Activated CD4-positive, alpha-beta T cell treated with anti-CD3 and anti-CD28 coated beads, Interleukin-2, amount 10 ng/mL, durations not matched to agents 24 days and 14 days (primary cell): ENCODE measurements at regions of chr7 and their contacts with region 1.

Region 1: DNA sequence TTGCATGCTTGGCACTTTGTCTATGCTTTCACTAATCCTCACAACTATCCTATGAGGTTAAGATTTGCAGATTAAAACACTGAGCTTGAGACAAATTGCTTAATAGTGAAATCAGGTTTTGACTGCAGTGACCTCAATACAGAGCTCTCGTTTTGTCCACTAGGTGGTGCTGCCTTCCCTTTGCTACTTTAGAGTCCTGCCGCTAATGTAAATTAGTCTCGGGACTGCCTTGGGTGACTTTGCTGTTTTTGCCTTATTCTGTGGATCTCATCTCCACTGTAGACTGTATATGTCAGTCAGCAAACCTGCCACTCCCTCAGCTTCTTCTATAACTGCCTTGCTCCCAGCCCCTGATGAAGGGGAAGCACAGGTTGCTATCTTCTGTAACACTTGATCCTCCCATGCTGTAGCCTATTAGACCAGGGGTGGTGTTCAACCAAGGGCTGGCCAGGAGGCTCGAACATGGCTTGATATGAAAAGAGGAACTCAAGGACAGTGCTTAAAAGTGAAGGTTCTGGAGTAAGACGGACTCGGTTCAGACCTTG is 26.0 kb downstream of the ASB4 start:
- DNase-seq: peak; percentile 86
- H3K4me3 Mint-ChIP-seq: no peak overlapping the region
- H3K27ac Mint-ChIP-seq: no peak overlapping the region
- H3K4me1 Mint-ChIP-seq: peaks cover 3% of the 10 kb centered on the region
- H3K27me3 Mint-ChIP-seq: peaks cover 11% of the 10 kb centered on the region

Region 2: GRCh38 chr7:95501261-95501832 is 10.4 kb before region 1 on chr7:
- intact Hi-C with region 1: loop called (anchors 1 kb)
- DNase-seq: peak; percentile 78
- H3K4me3 Mint-ChIP-seq: peak overlapping the region; percentile 10
- H3K27ac Mint-ChIP-seq: peak overlapping the region; percentile 84
- H3K4me1 Mint-ChIP-seq: peaks cover 27% of the 10 kb centered on the region
- H3K27me3 Mint-ChIP-seq: no peaks in the 10 kb centered on the region

Region 3: DNA sequence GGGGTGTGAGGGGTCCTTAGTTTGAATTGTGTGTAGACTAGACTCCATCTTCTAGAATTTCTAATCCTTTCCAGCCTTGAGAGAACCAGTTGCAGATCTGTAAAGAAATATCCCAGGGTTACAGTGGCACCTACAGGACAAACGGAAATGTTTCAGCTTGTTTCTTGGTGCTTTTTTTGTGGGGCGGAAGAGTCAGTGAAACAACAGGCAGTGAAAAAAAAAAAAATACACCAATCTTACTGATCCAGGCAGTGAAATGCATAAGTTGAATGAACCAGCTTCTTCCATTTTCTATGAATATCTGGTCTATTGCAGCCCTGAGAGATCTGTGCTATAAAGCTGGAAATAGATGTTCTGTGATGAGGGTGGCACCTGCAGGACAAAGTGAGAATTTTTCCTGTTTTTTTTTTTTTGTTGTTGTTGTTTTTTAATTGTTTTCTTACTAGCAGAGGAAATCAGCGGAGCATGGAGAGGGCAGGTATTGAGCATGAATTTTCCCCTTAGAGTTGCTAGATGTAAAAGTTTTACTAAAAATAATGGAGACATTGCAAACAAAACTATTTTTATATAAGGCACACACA is 178.7 kb after region 1 on chr7:
- intact Hi-C with region 1: loop called (anchors 1 kb)
- DNase-seq: peak; percentile 64
- H3K4me3 Mint-ChIP-seq: no peak overlapping the region
- H3K27ac Mint-ChIP-seq: no peak overlapping the region
- H3K4me1 Mint-ChIP-seq: peaks cover 4% of the 10 kb centered on the region
- H3K27me3 Mint-ChIP-seq: no peaks in the 10 kb centered on the region

Region 4: GRCh38 chr7:95871078-95871782 is 359.4 kb after region 1 on chr7:
- intact Hi-C with region 1: loop called (anchors 1 kb)
- DNase-seq: peak; percentile 63
- H3K4me3 Mint-ChIP-seq: no peak overlapping the region
- H3K27ac Mint-ChIP-seq: no peak overlapping the region
- H3K4me1 Mint-ChIP-seq: no peaks in the 10 kb centered on the region
- H3K27me3 Mint-ChIP-seq: peaks cover 2% of the 10 kb centered on the region